Gastrocnemius medialis (tissue), 4 donors: ENCODE measurements at regions of chr3 and their contacts with region 1.

Region 1: DNA sequence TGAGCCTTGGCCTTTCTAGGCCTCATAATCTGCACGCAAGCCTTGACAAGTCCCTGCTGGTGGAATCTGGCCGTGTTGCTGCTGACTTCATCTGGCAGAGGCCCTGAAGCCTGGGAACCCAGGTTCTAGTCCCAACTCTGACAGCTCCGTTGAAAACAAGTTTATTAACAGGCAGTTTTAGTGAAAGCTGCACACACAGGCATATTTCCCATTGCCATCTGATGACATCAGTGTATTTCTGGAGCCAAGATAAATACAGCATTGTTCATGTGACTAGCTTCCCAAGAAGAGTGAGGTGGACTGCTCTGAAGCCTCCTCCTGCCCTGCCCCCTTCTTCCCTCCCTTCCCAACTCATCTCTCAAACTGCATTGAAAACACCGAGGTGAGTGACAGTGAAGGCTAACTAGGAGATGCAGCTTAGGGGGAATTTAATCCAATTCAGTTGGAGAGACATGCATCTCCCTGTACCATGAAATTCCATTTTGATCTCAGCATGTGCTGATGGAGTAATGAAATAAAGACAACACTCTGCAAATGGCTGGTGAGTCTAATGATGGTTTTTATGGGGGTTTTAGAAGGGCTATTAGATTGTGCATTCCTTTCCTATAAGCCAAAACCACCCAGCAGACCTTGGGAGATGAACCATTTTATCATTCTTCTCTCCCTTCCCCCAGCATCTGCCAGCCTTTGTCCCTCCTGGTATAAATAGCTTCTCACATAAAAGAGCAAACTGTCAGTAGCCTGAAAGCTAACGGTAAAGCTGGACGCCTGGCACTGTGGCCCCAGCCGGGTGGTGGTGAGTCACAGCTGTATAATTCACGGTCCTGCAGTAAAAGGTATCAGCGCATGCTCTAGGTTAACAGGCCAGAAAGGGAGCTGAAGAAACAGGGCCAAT is 38.0 kb downstream of the PRICKLE2 start:
- DNase-seq: peak in 1 of 2 donors; percentile 35
- ATAC-seq: peak; percentile 41 to 58
- H3K4me3 ChIP-seq: no peak overlapping the region
- H3K27ac ChIP-seq: peak overlapping the region; percentile 9 to 62 (median 42)
- H3K4me1 ChIP-seq: peaks cover 22 to 36% of the 10 kb centered on the region in 2 donors
- H3K27me3 ChIP-seq: no peaks in the 10 kb centered on the region
- CTCF ChIP-seq: no peak
- POLR2A ChIP-seq: no peak

Region 2: DNA sequence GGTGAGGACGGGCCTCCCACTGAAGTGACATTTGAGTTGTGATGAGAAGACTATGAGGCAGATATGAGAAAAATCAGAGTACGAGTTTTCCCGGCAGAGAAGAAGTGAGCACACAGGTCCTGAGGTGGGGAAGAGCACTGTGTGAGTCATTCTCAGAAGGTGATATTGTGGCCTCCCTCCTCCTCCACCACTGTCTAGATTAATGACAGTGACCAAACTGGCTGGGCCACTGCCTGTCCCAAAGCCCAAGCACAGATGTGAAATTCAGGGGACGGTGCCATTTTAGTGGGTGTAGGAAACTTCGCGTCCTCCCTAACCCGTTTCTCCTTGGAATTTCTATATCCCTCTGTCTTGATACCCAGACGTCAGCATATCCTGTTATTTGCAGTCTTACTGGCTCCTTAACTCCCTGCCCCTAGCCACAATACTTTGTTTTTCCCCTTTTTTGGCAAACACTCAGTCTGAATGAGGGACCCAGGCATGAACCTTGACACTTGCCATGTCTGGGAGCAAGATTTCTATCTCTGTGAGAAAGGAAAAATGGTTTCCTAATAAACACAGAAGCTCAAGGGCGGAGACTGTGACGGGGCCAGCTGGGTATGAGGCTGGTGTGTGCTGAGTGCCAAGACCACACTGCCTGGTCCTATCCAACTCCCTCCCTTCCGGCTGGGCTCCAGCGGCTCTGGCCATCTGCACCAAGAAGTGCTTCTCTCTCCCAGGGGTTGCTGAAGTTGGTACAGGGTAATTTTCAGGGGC is 22.7 kb after region 1 on chr3:
- in situ Hi-C with region 1: no loop called
- intact Hi-C with region 1: loop called (anchors 2 kb)
- DNase-seq: peak; percentile 29 to 65
- ATAC-seq: peak; percentile 69 to 80
- H3K4me3 ChIP-seq: no peak overlapping the region
- H3K27ac ChIP-seq: peak overlapping the region; percentile 51 to 69 (median 60)
- H3K4me1 ChIP-seq: peaks cover 13 to 19% of the 10 kb centered on the region in 2 donors
- H3K27me3 ChIP-seq: no peaks in the 10 kb centered on the region
- CTCF ChIP-seq: no peak
- POLR2A ChIP-seq: no peak

Region 3: DNA sequence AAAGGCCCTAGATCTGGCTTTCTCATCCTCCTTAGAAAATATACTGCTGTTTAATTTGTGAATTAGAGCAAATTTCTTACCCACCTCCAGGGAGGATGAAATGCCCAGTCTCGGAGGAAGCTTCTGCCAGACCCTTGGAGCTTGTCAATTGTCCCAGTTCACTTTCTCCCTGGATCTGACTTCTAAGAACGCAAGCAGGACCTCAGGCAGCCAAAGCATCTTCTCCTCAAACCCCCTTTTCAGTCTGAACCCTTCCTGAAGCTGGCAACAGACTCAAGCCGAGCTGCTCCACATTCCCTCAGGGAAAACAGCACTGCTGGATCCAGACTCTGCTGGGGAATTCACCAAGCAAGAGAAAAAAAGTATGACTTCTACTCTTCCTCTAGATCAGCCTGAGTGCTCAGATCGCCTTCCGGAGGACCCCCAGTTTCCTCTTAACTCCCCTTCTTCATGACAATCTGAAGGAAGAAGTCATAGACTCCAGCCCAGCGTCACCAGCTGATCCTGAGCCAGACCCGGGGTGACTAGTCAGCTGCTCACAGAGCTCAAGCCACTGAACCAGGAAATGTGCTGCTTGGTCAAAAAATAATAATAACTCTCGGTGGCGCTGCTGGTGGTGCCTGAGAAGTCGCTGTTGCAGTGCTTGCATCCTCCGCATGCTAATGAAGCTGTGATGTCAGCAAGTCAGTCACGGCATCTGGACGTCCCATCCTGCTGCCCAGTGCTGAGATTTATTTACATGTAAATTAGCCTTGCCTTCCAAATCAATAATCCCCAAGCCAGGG is 37.7 kb after region 1 on chr3 and contains the start of gene PRICKLE2:
- in situ Hi-C with region 1: no loop called
- intact Hi-C with region 1: loop called (anchors 5 kb)
- DNase-seq: peak; percentile 37 to 60
- ATAC-seq: peak; percentile 73 to 79
- H3K4me3 ChIP-seq: peak within 1 kb of the TSS; percentile 35 to 50 (median 44)
- H3K27ac ChIP-seq: peak within 1 kb of the TSS; percentile 65 to 79 (median 74)
- H3K4me1 ChIP-seq: peaks cover 19 to 37% of the 10 kb centered on the region in 2 donors
- H3K27me3 ChIP-seq: no peaks in the 10 kb centered on the region
- CTCF ChIP-seq: peak in 2 of 5 experiments; percentile 17 to 25
- POLR2A ChIP-seq: peak in 1 of 2 donors; percentile 18
- total RNA-seq, gene PRICKLE2: 3.6 to 6.7 (median 4.6) TPM

Region 4: DNA sequence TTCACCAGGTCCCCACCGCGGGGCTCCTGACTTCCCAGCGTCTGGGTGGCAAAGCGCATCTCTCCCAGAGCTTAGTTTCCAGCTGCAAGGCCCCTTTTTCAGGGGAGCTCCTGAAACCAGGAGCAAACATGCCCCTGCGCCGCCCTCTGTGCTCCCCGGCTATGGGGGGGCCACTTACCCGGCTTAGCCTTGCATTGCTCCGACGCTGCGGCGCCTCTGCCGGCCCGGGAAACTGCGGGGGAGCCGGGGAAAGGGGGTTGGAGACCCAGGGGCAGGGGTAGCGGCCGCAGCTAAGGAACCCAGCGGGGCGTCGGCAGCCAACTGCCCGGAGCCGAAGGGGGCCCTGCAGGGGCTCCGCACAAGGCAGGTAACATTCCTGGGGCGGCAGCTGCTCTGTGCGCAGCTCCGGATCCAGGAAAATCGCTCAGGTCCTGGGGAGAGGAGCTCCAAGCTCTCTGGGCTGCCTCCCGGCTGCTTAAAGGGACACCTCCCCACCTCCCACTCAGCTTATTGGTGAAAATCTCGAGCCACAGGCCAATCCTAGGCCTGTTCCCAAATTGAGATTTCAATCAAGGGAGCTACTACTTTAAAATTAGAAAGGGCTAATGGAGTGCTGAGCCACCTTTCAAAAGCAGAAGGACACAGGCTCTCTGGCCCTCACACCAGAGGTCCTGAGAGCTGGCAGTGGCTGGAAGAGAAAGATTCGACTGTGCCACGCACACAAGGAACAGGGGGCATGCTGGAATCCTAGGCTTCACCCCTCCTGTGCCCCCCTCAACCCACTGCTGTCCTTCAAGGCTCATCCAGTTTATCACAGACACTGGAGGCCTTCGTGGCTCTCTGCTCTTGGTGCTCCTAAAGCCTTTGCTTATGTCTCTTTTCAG is 80.7 kb after region 1 on chr3:
- in situ Hi-C with region 1: no loop called
- intact Hi-C with region 1: loop called (anchors 5 kb)
- DNase-seq: peak; percentile 38 to 40
- ATAC-seq: peak in 1 of 2 donors; percentile 62
- H3K4me3 ChIP-seq: peak overlapping the region; percentile 59 to 74 (median 67)
- H3K27ac ChIP-seq: peak overlapping the region; percentile 76 to 81 (median 76)
- H3K4me1 ChIP-seq: peaks cover 13 to 18% of the 10 kb centered on the region in 2 donors
- H3K27me3 ChIP-seq: no peaks in the 10 kb centered on the region
- CTCF ChIP-seq: no peak
- POLR2A ChIP-seq: peak; percentile 48 to 58

Region 5: GRCh38 chr3:64422192-64422591 is 234.9 kb after region 1 on chr3:
- in situ Hi-C with region 1: no loop called
- intact Hi-C with region 1: no loop called
- DNase-seq: no peak
- ATAC-seq: no peak
- H3K4me3 ChIP-seq: no peak overlapping the region
- H3K27ac ChIP-seq: no peak overlapping the region
- H3K4me1 ChIP-seq: no peaks in the 10 kb centered on the region
- H3K27me3 ChIP-seq: no peaks in the 10 kb centered on the region
- CTCF ChIP-seq: no peak
- POLR2A ChIP-seq: no peak